PC-9 (cell line): ENCODE measurements at regions of chr12 and their contacts with region 1.

Region 1: DNA sequence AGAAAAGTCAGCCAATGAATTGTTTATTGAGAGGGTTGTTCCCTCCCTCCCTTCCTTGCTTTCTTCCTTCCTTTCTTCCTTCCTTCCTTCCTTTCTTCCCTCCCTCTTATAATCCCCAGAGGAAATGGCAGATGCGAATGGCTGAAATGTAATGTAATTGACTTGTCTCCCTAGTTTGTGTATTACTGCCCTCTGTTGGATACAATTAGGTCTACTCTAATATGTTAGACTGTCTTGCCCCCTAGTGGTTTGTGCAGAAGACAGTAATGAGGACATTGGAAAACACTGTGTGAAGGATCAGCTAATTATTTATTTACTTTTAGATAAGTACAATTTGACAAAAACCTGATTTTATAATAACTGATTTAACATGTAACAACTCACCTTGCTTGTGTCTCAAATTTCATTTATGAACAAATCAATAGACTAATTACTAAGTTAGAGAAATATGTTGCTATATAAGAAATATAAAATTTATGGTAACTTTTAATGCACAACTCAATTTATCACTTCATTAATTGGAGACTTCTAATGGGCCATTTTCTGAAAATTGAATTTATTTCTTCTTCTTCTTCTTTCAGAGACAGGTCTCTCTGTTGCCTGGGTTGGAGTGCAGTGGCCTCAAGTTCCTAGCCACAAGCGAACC is 229.8 kb upstream of the LRIG3 start:
- DNase-seq: peak; percentile 6 to 71
- H3K4me3 ChIP-seq: no peak overlapping the region
- H3K27ac ChIP-seq: no peak overlapping the region
- H3K4me1 ChIP-seq: no peaks in the 10 kb centered on the region
- H3K27me3 ChIP-seq: no peaks in the 10 kb centered on the region
- CTCF ChIP-seq: peak; percentile 93

Region 2: DNA sequence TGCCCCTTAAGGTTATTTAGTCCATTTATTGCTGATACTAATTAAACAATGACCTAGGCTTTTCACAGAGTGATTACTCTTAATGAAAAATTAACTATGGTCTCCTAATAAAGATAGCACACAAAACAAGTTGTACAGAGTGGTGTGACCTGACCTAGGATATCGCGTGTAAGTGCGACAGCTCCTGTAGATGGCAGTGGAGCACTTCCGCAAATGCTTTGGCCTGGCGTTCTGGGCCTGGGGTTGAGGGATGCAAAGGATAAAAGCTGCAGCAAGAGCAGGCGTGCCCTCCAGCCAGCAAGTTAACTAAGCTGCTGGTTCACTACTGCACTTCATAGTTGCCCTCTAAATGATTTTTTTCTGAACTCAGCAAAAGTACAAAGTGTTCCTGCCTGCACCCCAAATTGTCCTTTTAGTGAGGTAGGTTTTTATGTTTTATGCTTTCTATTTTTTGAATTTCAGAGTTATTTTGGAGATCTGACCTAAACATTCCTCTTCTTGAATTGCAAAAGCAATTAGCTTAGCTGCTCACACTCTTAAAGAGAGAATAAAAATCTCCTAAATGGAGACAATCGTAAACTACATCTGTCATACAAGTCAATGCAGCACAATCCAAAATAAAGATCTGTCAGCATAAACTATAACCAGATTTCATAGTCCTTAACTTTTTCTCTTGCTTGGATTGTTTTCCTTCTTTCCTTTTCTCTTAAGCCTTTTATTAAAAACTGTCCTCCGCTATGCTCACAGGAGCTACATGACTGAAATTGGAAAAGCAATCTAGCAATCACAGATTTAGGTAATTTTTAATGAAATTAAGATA is 609.4 kb before region 1 on chr12:
- CTCF ChIA-PET with region 1: interaction called, 6 read pairs
- POLR2A ChIA-PET with region 1: no interaction called
- intact Hi-C with region 1: loop called (anchors 1 kb)
- DNase-seq: peak in 1 of 2 experiments; percentile 46
- H3K4me3 ChIP-seq: no peak overlapping the region
- H3K27ac ChIP-seq: no peak overlapping the region
- H3K4me1 ChIP-seq: no peaks in the 10 kb centered on the region
- H3K27me3 ChIP-seq: no peaks in the 10 kb centered on the region
- CTCF ChIP-seq: peak; percentile 53

Region 3: GRCh38 chr12:58833853-58834252 is 316.3 kb before region 1 on chr12:
- CTCF ChIA-PET with region 1: no interaction called
- POLR2A ChIA-PET with region 1: no interaction called
- intact Hi-C with region 1: loop called (anchors 5 kb)
- DNase-seq: no peak
- H3K4me3 ChIP-seq: no peak overlapping the region
- H3K27ac ChIP-seq: no peak overlapping the region
- H3K4me1 ChIP-seq: no peaks in the 10 kb centered on the region
- H3K27me3 ChIP-seq: no peaks in the 10 kb centered on the region
- CTCF ChIP-seq: no peak; the same call in 1 of the 2 replicates

Region 4: GRCh38 chr12:59113831-59114615 is 36.1 kb before region 1 on chr12:
- CTCF ChIA-PET with region 1: no interaction called
- POLR2A ChIA-PET with region 1: no interaction called
- intact Hi-C with region 1: loop called (anchors 1 kb)
- DNase-seq: peak; percentile 51 to 64
- H3K4me3 ChIP-seq: no peak overlapping the region
- H3K27ac ChIP-seq: no peak overlapping the region
- H3K4me1 ChIP-seq: no peaks in the 10 kb centered on the region
- H3K27me3 ChIP-seq: no peaks in the 10 kb centered on the region
- CTCF ChIP-seq: peak; percentile 88